GM12878 (cell line): ENCODE measurements at regions of chr9 and their contacts with region 1.

Region 1: DNA sequence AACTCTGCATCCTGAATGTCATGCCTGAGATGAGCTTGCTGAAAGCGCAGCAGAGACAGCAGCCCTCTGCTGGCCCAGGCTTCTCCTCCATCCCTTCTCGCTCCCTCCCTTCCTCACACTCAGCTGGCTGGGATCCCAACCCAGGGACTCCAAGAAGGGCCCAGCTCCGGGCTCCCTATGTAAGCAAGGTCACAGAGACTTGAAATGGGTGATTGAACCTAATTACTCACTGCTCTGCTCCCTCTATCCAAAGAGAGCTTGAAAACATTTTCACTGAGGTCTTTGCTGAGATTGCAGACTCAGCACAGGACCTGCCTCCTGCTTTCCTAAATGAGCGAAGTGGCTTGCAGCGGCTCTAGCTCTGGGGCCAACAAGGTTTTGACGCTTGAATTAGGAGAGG is 42.8 kb downstream of the RAPGEF1 start:
- DNase-seq: no peak
- ATAC-seq: no peak
- H3K4me3 ChIP-seq: no peak overlapping the region
- H3K27ac ChIP-seq: no peak overlapping the region
- H3K4me1 ChIP-seq: peaks cover 30% of the 10 kb centered on the region
- H3K27me3 ChIP-seq: no peaks in the 10 kb centered on the region
- CTCF ChIP-seq: no peak
- EP300 ChIP-seq: no peak
- POLR2A ChIP-seq: no peak
- RAD21 ChIP-seq: no peak

Region 2: GRCh38 chr9:131727184-131727759 is 30.2 kb after region 1 on chr9:
- CTCF ChIA-PET with region 1: interaction called, 3 read pairs
- POLR2A ChIA-PET with region 1: interaction called, 291 read pairs
- RAD21 ChIA-PET with region 1: interaction called, 4 read pairs
- SMC1A ChIA-PET with region 1: interaction called, 416 read pairs
- in situ Hi-C with region 1: no loop called
- intact Hi-C with region 1: no loop called
- DNase-seq: no peak
- ATAC-seq: no peak
- H3K4me3 ChIP-seq: peak overlapping the region; percentile 63
- H3K27ac ChIP-seq: peak overlapping the region; percentile 99
- H3K4me1 ChIP-seq: peaks cover 69% of the 10 kb centered on the region
- H3K27me3 ChIP-seq: no peaks in the 10 kb centered on the region
- CTCF ChIP-seq: no peak
- EP300 ChIP-seq: no peak
- POLR2A ChIP-seq: 0 out of 2 replicates have a peak, but pooled peaks have one; percentile 20
- RAD21 ChIP-seq: no peak